Naive thymus-derived CD8-positive, alpha-beta T cell (primary cell): ENCODE measurements at regions of chr19 and their contacts with region 1.

Region 1: DNA sequence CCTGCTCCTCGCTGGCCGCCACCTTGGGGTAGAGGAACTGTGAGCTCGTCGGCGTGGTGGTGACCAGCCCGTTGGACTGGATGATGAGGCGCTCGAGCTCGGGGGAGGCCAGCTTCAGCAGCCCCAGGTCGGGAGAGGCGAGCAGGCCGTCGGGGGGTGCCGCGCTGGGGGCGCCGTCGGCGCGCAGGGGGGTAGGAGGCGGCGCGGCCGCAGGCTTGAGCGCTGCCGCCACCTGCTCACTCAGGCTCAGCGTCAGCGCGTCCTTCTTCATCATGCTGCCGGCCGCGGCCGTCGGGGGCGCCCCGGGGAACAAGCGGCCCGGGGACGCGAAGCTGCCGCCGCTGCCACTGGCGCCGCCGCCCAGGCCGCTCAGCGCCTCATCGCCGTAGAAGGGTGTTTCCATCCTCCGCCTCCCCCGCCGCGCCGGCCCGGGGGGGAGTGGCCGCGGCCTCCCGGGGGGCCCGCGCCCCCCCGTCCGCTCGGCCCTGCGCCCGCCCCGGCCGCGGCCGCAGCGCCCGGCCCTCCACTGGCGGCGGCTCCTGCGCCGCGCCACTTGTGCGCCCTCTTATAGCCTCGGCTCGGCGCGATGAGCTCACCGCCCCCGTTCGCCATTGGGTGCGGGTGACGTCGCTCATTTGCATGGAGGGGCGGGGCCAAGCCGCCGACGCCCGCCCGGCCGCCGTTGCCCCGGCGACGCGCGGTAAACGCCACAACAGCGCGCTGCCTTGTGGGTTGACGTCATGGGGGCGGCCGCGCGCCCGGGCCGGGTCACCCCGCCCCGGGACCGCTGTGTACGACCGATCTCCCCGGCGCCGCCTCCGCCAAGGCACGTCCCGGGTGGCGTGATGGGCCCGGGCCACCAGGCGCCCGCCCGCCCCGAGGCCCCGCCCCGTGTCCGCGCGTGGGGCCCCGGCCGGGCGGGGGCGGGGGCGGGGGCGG is at the start of gene JUND:
- DNase-seq: peak; percentile 94 to 99 (median 99)
- ATAC-seq: peak; percentile 63 to 68
- H3K4me3 Mint-ChIP-seq: peak within 1 kb of the TSS; percentile 91 to 97 (median 96)
- H3K27ac Mint-ChIP-seq: peak within 1 kb of the TSS; percentile 96 to 100 (median 98)
- H3K4me1 Mint-ChIP-seq: peaks cover 31 to 62% (median 52%) of the 10 kb centered on the region in 4 donors
- H3K27me3 Mint-ChIP-seq: peaks cover 0 to 6% (median 0%) of the 10 kb centered on the region in 5 donors
- polyA plus RNA-seq, gene JUND: 43.3 to 169 (median 69.1) TPM

Region 2: DNA sequence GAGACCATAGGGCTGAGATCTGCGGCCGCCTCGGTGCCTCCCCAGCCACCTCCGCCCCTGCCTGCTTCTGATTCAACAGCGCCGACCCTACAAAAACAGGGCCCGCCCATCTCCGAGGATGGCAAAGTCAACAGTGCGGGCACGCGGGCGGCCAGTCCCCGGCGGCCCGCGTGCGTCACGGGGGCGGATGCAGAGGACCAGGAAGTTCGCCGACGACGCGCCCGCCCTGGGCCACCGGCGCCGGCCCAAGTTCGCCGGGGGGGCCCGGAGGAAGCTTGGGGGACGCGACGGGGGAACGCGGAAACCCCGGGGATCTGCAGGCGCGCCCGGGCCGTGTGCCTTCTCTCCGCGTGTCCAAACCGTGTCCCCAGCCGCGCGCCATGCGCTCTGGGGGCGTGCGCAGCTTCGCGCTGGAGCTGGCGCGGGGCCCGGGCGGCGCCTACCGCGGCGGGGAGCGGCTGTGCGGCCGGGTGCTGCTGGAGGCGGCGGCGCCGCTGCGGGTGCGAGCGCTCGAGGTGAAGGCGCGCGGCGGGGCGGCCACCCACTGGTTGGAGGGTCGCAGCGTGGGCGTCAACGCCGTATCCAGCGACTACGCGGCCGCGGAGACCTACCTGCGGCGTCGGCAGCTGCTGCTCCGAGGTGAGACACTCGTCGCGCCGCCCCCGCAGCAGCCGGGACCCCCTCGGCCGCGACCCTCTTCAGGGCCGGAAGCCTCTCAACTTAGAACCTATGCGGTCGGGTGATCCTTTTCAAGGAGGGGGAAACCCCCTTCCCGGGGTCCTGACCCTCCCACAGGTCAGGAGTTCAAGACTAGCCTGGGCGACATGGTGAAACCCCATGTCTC is 280.2 kb before region 1 on chr19:
- POLR2A ChIA-PET with region 1: interaction called, 11 read pairs
- DNase-seq: peak; percentile 89 to 98 (median 96)
- ATAC-seq: peak; percentile 83
- H3K4me3 Mint-ChIP-seq: peak overlapping the region; percentile 86 to 96 (median 92)
- H3K27ac Mint-ChIP-seq: peak overlapping the region; percentile 97 to 100 (median 99)
- H3K4me1 Mint-ChIP-seq: peaks cover 9 to 38% (median 29%) of the 10 kb centered on the region in 4 donors
- H3K27me3 Mint-ChIP-seq: no peaks in the 10 kb centered on the region

Region 3: GRCh38 chr19:18117692-18118378 is 163.5 kb before region 1 on chr19:
- POLR2A ChIA-PET with region 1: interaction called, 19 read pairs
- DNase-seq: peak; percentile 92 to 98 (median 96)
- ATAC-seq: peak; percentile 69 to 73
- H3K4me3 Mint-ChIP-seq: peak overlapping the region; percentile 79 to 95 (median 90)
- H3K27ac Mint-ChIP-seq: peak overlapping the region; percentile 95 to 100 (median 98)
- H3K4me1 Mint-ChIP-seq: peaks cover 18 to 48% (median 40%) of the 10 kb centered on the region in 4 donors
- H3K27me3 Mint-ChIP-seq: no peaks in the 10 kb centered on the region

Region 4: GRCh38 chr19:18203863-18204393 is 77.4 kb before region 1 on chr19 and contains the start of gene RAB3A:
- POLR2A ChIA-PET with region 1: interaction called, 52 read pairs
- DNase-seq: peak; percentile 95 to 100 (median 99)
- ATAC-seq: peak; percentile 86 to 87
- H3K4me3 Mint-ChIP-seq: peak within 1 kb of the TSS; percentile 92 to 98 (median 96)
- H3K27ac Mint-ChIP-seq: peak within 1 kb of the TSS; percentile 74 to 99 (median 97)
- H3K4me1 Mint-ChIP-seq: peaks cover 11 to 29% (median 27%) of the 10 kb centered on the region in 4 donors
- H3K27me3 Mint-ChIP-seq: peaks cover 0 to 6% (median 4%) of the 10 kb centered on the region in 5 donors
- polyA plus RNA-seq, gene RAB3A: 1.3 to 2.3 (median 1.8) TPM

Region 5: DNA sequence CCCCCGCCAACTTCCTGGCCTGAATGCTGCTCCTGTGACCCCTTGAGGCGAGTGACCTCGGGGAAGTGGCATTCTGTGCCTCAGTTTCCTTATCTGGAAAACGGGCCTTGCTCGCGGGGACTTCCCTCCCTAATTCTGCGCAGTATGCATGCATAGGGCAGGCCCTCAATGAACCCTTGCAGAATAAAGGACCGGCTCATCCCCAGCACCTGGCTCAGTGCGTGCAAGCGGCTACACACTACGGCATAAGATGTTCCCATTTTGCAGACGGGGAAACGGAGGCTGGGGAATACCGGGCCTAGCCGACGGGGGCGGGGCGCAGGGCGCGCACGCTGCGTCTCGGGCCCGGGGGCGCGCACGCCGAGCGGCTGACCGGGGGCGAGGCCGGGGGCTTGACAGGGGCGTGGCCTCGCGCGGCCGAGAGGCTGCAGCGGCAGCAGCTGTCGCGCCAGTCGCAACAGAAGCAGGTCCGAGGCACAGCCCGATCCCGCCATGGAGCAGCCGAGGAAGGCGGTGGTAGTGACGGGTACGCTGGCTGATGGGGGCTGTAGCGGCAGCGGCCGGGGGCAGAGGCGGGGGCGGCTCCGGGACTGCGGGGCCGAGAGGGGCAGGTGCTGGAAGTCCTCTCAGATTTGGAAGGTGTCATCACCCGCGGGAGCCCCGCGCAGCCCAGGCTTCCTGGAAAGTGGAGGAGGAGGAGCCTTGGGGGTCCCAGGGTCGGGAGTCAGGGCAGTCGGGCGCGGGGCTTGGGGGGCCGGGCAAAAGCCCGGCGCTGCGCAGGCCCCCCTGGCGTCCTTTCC is 59.0 kb after region 1 on chr19 and contains the start of gene PGPEP1:
- POLR2A ChIA-PET with region 1: interaction called, 60 read pairs
- DNase-seq: peak in 9 of 10 donors; percentile 29 to 69 (median 52)
- ATAC-seq: peak; percentile 42 to 67
- H3K4me3 Mint-ChIP-seq: peak within 1 kb of the TSS; percentile 84 to 93 (median 90)
- H3K27ac Mint-ChIP-seq: peak within 1 kb of the TSS; percentile 28 to 97 (median 94)
- H3K4me1 Mint-ChIP-seq: peaks cover 10 to 24% (median 20%) of the 10 kb centered on the region in 4 donors
- H3K27me3 Mint-ChIP-seq: peaks cover 0 to 1% (median 0%) of the 10 kb centered on the region in 5 donors
- polyA plus RNA-seq, gene PGPEP1: 9.3 to 11.9 (median 9.7) TPM

Region 6: DNA sequence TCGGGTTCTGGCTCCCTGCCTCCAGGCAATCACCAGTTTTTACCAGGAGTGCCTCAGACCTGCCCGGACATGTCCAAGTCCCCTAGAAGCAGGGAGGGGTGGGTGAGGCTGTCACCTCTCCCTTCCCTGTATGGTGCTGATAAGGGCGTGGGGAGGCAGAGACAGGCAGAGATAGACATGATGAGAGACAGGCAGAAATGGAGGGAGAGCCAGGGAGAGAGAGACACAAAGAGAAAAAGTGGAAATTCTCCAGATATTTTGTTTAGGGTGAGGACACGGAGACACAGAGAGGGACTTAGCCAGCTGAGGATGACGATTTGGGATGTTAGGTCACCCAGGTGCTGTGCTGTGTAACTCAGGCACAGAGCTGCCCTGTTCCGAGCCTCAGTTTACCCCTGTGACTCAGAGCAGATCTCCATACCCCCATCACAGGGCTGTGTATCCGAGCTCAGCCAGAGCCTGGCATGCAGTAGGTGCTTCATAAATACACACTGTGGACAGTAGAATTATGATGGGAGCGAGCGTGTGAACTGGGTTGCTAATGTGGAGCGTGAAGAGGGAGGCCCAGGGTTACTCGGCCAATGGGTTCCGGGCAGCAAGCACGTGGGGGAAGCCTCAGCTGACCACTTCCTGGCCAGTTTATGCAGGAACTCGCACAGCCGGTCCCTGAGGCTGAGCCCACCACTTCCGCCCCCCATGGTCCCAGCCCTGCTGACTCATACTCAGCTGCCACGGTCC is 92.7 kb after region 1 on chr19:
- POLR2A ChIA-PET with region 1: no interaction called
- DNase-seq: peak in 1 of 10 donors; percentile 57
- ATAC-seq: peak; percentile 44 to 57
- H3K4me3 Mint-ChIP-seq: peak overlapping the region in 3 of 10 donors; percentile 0 to 36 (median 34)
- H3K27ac Mint-ChIP-seq: peak overlapping the region in 5 of 10 donors; percentile 4 to 67 (median 36)
- H3K4me1 Mint-ChIP-seq: peaks cover 4 to 15% (median 10%) of the 10 kb centered on the region in 4 donors
- H3K27me3 Mint-ChIP-seq: no peaks in the 10 kb centered on the region

Region 7: DNA sequence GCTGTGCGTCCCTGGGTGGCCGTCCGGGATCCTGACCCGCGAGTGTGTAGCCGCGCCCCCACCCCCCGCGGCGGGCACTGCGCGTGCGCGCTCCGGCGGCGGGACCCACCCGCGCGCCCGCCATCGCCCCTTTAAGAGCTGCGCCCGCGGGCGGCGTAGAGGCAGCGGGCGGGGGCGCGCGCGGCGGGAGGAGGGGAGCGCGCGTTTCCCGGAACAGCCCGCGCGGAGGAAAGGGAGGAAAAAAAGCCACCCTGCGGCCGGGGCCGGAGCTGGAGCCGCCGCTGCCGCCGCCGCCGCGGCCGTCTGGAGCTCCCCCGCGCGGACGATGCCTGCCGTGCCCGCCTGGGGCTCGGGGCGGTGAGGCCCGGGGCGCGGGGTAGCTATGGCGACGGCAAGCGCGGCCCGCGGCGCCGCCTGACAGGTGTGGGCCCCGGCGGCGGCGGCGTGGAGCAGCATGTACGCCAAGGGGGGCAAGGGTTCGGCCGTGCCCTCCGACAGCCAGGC is 137.9 kb after region 1 on chr19 and contains the start of gene SSBP4:
- POLR2A ChIA-PET with region 1: interaction called, 33 read pairs
- DNase-seq: peak; percentile 50 to 78 (median 69)
- ATAC-seq: peak; percentile 62 to 67
- H3K4me3 Mint-ChIP-seq: peak within 1 kb of the TSS; percentile 74 to 92 (median 86)
- H3K27ac Mint-ChIP-seq: peak within 1 kb of the TSS; percentile 53 to 95 (median 86)
- H3K4me1 Mint-ChIP-seq: peaks cover 38 to 84% (median 82%) of the 10 kb centered on the region in 4 donors
- H3K27me3 Mint-ChIP-seq: peaks cover 0 to 32% (median 9%) of the 10 kb centered on the region in 5 donors
- polyA plus RNA-seq, gene SSBP4: 48.1 to 78.8 (median 61.1) TPM